ENCODE measurements at regions of chr13 and their contacts with region 1.

Region 1: GRCh38 chr13:91406619-91407018 is 8.2 kb downstream of the GPC5 start:
- DNase-seq: peak; percentile 56
- H3K4me3 ChIP-seq: no peak overlapping the region
- H3K27ac ChIP-seq: no peak overlapping the region
- H3K4me1 ChIP-seq: no peaks in the 10 kb centered on the region
- H3K27me3 ChIP-seq: peaks cover 14 to 29% of the 10 kb centered on the region in 2 experiments
- CTCF ChIP-seq: peak; percentile 53 to 55
- POLR2A ChIP-seq: no peak

Region 2: DNA sequence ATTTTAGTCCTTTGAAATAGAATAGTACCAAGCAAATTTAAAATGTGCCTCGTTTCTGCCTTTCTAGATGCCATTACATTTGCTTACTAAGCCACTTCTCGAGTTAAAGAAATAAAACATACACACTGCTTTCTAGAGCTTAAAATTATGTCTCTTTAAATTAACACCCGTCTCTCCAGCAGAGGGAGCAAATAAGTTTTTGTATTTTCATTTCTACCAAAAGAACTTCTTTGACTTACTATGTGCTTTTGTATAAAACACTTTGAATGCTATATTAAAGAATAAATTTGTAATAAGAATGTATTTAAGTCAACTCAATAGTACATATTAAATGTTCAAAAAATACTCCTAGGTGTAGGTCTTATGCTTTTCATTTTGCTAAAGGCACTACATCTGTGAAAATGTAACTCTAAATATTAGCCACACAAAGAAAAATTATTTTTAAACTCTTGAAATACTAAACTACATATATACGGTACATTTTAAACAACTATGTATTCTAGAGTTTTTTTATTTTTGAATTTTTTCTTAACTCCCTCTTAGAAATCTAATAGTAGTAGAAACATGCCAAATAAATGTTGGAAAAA is 328.4 kb before region 1 on chr13:
- CTCF ChIA-PET with region 1: no interaction called
- POLR2A ChIA-PET with region 1: no interaction called
- dilution Hi-C with region 1: no loop called
- intact Hi-C with region 1: loop called (anchors 2 kb)
- DNase-seq: peak; percentile 5
- H3K4me3 ChIP-seq: no peak overlapping the region
- H3K27ac ChIP-seq: no peak overlapping the region
- H3K4me1 ChIP-seq: no peaks in the 10 kb centered on the region
- H3K27me3 ChIP-seq: no peaks in the 10 kb centered on the region
- CTCF ChIP-seq: no peak
- POLR2A ChIP-seq: no peak

Region 3: GRCh38 chr13:91313103-91313502 is 93.5 kb before region 1 on chr13:
- CTCF ChIA-PET with region 1: interaction called, 43 read pairs
- POLR2A ChIA-PET with region 1: no interaction called
- dilution Hi-C with region 1: no loop called
- intact Hi-C with region 1: loop called (anchors 1 kb)
- DNase-seq: peak; percentile 51
- H3K4me3 ChIP-seq: no peak overlapping the region
- H3K27ac ChIP-seq: no peak overlapping the region
- H3K4me1 ChIP-seq: no peaks in the 10 kb centered on the region
- H3K27me3 ChIP-seq: peaks cover 4 to 20% of the 10 kb centered on the region in 2 experiments
- CTCF ChIP-seq: peak; percentile 31 to 48
- POLR2A ChIP-seq: no peak

Region 4: GRCh38 chr13:91375116-91375729 is 31.4 kb before region 1 on chr13:
- CTCF ChIA-PET with region 1: interaction called, 20 read pairs
- POLR2A ChIA-PET with region 1: no interaction called
- dilution Hi-C with region 1: no loop called
- intact Hi-C with region 1: loop called (anchors 1 kb)
- DNase-seq: no peak
- H3K4me3 ChIP-seq: no peak overlapping the region
- H3K27ac ChIP-seq: no peak overlapping the region
- H3K4me1 ChIP-seq: no peaks in the 10 kb centered on the region
- H3K27me3 ChIP-seq: peaks cover 0 to 8% of the 10 kb centered on the region in 2 experiments
- CTCF ChIP-seq: peak; percentile 23 to 45
- POLR2A ChIP-seq: no peak

Region 5: GRCh38 chr13:91381371-91381770 is 25.2 kb before region 1 on chr13:
- CTCF ChIA-PET with region 1: interaction called, 21 read pairs
- POLR2A ChIA-PET with region 1: no interaction called
- dilution Hi-C with region 1: no loop called
- intact Hi-C with region 1: no loop called
- DNase-seq: peak; percentile 22
- H3K4me3 ChIP-seq: no peak overlapping the region
- H3K27ac ChIP-seq: no peak overlapping the region
- H3K4me1 ChIP-seq: no peaks in the 10 kb centered on the region
- H3K27me3 ChIP-seq: peaks cover 4 to 8% of the 10 kb centered on the region in 2 experiments
- CTCF ChIP-seq: no peak
- POLR2A ChIP-seq: no peak

Region 6: GRCh38 chr13:91426913-91427312 is 20.3 kb after region 1 on chr13:
- CTCF ChIA-PET with region 1: no interaction called
- POLR2A ChIA-PET with region 1: no interaction called
- dilution Hi-C with region 1: no loop called
- intact Hi-C with region 1: no loop called
- DNase-seq: no peak
- H3K4me3 ChIP-seq: no peak overlapping the region
- H3K27ac ChIP-seq: no peak overlapping the region
- H3K4me1 ChIP-seq: no peaks in the 10 kb centered on the region
- H3K27me3 ChIP-seq: no peaks in the 10 kb centered on the region
- CTCF ChIP-seq: no peak
- POLR2A ChIP-seq: no peak

Measured in endothelial cell of umbilical vein (primary cell).